ENCODE measurements at regions of chrX and their contacts with region 1.

Region 1: DNA sequence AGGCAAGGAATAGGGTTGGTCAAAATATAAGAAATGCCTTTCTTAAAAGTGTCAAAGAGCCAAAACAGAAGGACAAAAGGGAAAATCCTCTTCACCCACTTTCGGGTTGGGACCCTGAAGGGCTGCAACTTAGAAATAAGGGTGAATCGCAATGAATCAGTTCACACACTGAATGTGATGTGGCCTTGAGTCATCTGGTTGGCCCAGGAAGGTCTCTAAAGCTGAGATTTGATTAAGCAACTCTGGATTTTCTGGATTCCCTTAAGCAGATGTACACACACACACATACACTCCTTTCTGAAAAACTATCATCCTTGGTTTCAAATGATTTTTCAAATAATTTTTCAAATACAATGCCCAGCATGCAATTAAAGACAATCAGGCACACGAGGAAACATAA is 13.1 kb downstream of the TAB3 start:
- DNase-seq: no peak
- H3K4me3 Mint-ChIP-seq: no peak overlapping the region
- H3K27ac Mint-ChIP-seq: no peak overlapping the region
- H3K4me1 Mint-ChIP-seq: peaks cover 28% of the 10 kb centered on the region
- H3K27me3 Mint-ChIP-seq: no peaks in the 10 kb centered on the region

Region 2: GRCh38 chrX:30652527-30653414 is 223.2 kb before region 1 on chrX:
- intact Hi-C with region 1: loop called (anchors 2 kb)
- DNase-seq: peak; percentile 89
- H3K4me3 Mint-ChIP-seq: peak overlapping the region; percentile 94
- H3K27ac Mint-ChIP-seq: peak overlapping the region; percentile 98
- H3K4me1 Mint-ChIP-seq: peaks cover 42% of the 10 kb centered on the region
- H3K27me3 Mint-ChIP-seq: no peaks in the 10 kb centered on the region

Measured in activated T-helper 2 cell treated with anti-CD3 and anti-CD28 coated beads, Interferon-gamma antibody, Interleukin-2, Interleukin-4, amounts not matched to agents 10 μg/mL and 5 μg/mL and 100 μg/mL, durations not matched to agents 14 hours and 24 hours and 36 hours (primary cell).